Transverse colon (tissue), 4 donors: ENCODE measurements at regions of chr6 and their contacts with region 1.

Region 1: GRCh38 chr6:90393232-90393884 is 96.7 kb upstream of the BACH2 start:
- DNase-seq: peak; percentile 57
- H3K4me3 ChIP-seq: no peak overlapping the region
- H3K27ac ChIP-seq: no peak overlapping the region
- H3K4me1 ChIP-seq: no peaks in the 10 kb centered on the region
- H3K27me3 ChIP-seq: no peaks in the 10 kb centered on the region
- CTCF ChIP-seq: peak; percentile 65 to 75 (median 66)
- EP300 ChIP-seq: no peak
- POLR2A ChIP-seq: no peak

Region 2: DNA sequence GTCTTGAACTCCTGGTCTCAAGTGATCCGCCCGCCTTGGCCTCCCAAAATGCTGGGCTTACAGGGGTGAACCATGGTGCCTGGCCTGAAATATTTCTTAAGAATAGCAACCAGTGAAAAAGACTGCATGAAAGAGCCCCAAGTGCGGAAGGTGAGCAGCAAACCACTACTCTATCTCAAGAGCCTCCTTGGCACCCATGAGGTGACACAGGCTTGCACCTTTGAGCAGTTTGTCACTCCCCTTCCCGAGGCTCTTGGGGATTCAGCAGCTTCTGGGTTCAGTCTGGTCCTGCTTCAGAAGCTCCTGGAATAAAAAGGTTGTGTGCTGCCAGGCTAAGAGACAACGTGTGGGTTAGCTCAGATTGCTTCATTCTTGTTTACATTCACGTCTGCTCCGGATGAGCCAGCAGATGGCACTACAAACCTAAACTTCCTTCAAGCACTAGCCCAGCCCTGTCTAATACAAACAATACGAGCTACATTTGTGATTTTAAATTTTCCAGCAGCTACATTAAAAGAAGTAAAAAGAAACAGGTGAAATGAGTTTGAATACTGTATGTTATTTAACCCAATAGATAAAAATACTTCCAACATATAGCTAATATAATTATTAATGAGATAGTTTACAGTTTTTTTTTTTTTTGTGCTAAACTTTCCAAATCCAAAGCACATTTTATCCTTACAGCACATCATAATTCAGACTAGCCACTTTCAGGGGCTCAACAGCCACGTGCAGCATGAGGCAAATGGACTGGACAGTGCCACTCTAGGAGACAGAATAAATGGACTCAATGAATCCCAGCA is 452.9 kb before region 1 on chr6:
- in situ Hi-C with region 1: loop called in 1 of 4 experiments (anchors 10 kb)
- intact Hi-C with region 1: loop called (anchors 10 kb)
- DNase-seq: peak; percentile 71
- H3K4me3 ChIP-seq: no peak overlapping the region
- H3K27ac ChIP-seq: no peak overlapping the region
- H3K4me1 ChIP-seq: peaks cover 0 to 20% (median 10%) of the 10 kb centered on the region in 4 donors
- H3K27me3 ChIP-seq: no peaks in the 10 kb centered on the region
- CTCF ChIP-seq: peak; percentile 61 to 75 (median 63)
- EP300 ChIP-seq: no peak
- POLR2A ChIP-seq: no peak